T-cell (primary cell): ENCODE measurements at regions of chr2 and their contacts with region 1.

Region 1: DNA sequence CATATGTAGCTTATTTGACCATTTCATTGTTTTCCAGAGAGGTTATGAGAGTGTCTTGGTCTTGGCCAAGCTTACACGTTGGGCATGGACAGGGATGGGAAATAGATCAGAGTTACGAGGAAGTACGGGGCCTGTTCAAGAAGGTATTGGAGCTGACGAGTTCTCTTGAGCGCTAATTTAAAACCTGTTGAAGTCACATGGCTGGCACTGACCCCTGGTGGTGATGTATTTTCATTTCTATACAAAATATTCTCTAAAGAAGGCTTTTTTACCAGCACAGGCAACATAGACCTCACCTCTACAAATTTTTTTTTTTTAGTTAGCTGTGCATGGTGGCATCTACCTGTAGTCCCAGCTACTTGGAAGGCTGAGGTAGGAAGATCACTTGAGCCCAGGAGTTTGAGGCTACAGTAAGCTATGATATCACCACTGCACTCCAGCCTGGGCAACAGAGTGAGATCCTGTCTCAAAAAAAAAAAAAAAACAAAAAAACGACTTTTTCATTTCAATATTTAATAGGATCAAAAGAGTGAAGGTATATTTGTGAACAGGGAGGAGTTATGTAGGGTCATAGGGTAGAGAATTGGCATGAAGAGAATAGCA is 19.6 kb downstream of the UGP2 start:
- DNase-seq: peak; percentile 18 to 84 (median 58)
- ATAC-seq: peak; percentile 56 to 61 (median 58)
- H3K4me3 ChIP-seq: no peak overlapping the region
- H3K4me3 Mint-ChIP-seq: no peak overlapping the region
- H3K27ac ChIP-seq: no peak overlapping the region
- H3K27ac Mint-ChIP-seq: peak overlapping the region in 1 of 2 donors; percentile 22
- H3K4me1 ChIP-seq: peaks cover 5 to 15% of the 10 kb centered on the region in 2 experiments
- H3K4me1 Mint-ChIP-seq: peaks cover 27 to 47% (median 37%) of the 10 kb centered on the region in 3 donors
- H3K27me3 ChIP-seq: no peaks in the 10 kb centered on the region
- H3K27me3 Mint-ChIP-seq: no peaks in the 10 kb centered on the region

Region 2: GRCh38 chr2:63600881-63601460 is 260.4 kb before region 1 on chr2:
- CTCF ChIA-PET with region 1: no interaction called
- POLR2A ChIA-PET with region 1: interaction called in 1 of 2 experiments, 12 read pairs
- DNase-seq: no peak
- ATAC-seq: no peak
- H3K4me3 ChIP-seq: no peak overlapping the region
- H3K4me3 Mint-ChIP-seq: no peak overlapping the region
- H3K27ac ChIP-seq: no peak overlapping the region
- H3K27ac Mint-ChIP-seq: peak overlapping the region in 1 of 2 donors; percentile 25
- H3K4me1 ChIP-seq: no peaks in the 10 kb centered on the region
- H3K4me1 Mint-ChIP-seq: peaks cover 3 to 9% (median 6%) of the 10 kb centered on the region in 3 donors
- H3K27me3 ChIP-seq: no peaks in the 10 kb centered on the region
- H3K27me3 Mint-ChIP-seq: no peaks in the 10 kb centered on the region

Region 3: GRCh38 chr2:63692002-63692606 is 169.2 kb before region 1 on chr2:
- CTCF ChIA-PET with region 1: interaction called, 31 to 67 read pairs
- POLR2A ChIA-PET with region 1: interaction called in 1 of 2 experiments, 3 read pairs
- DNase-seq: peak in 10 of 35 experiments; percentile 4 to 68 (median 14)
- ATAC-seq: peak in 3 of 4 experiments; percentile 49 to 63 (median 58)
- H3K4me3 ChIP-seq: no peak overlapping the region
- H3K4me3 Mint-ChIP-seq: no peak overlapping the region
- H3K27ac ChIP-seq: no peak overlapping the region
- H3K27ac Mint-ChIP-seq: no peak overlapping the region
- H3K4me1 ChIP-seq: peaks cover 0 to 2% of the 10 kb centered on the region in 2 experiments
- H3K4me1 Mint-ChIP-seq: peaks cover 0 to 2% (median 0%) of the 10 kb centered on the region in 3 donors
- H3K27me3 ChIP-seq: no peaks in the 10 kb centered on the region
- H3K27me3 Mint-ChIP-seq: no peaks in the 10 kb centered on the region

Region 4: GRCh38 chr2:63698825-63699548 is 162.3 kb before region 1 on chr2:
- CTCF ChIA-PET with region 1: interaction called, 47 to 67 read pairs
- POLR2A ChIA-PET with region 1: interaction called in 1 of 2 experiments, 5 read pairs
- DNase-seq: peak in 3 of 35 experiments; percentile 4 to 49 (median 5)
- ATAC-seq: peak; percentile 67 to 89 (median 75)
- H3K4me3 ChIP-seq: no peak overlapping the region
- H3K4me3 Mint-ChIP-seq: no peak overlapping the region
- H3K27ac ChIP-seq: no peak overlapping the region
- H3K27ac Mint-ChIP-seq: no peak overlapping the region
- H3K4me1 ChIP-seq: no peaks in the 10 kb centered on the region
- H3K4me1 Mint-ChIP-seq: peaks cover 0 to 3% (median 0%) of the 10 kb centered on the region in 3 donors
- H3K27me3 ChIP-seq: no peaks in the 10 kb centered on the region
- H3K27me3 Mint-ChIP-seq: no peaks in the 10 kb centered on the region

Region 5: GRCh38 chr2:63841254-63842022 is 19.9 kb before region 1 on chr2 and contains the start of gene UGP2:
- CTCF ChIA-PET with region 1: interaction called, 9 to 28 read pairs
- POLR2A ChIA-PET with region 1: interaction called, 4 to 14 read pairs
- DNase-seq: peak; percentile 61 to 90 (median 83)
- ATAC-seq: peak; percentile 66 to 72 (median 70)
- H3K4me3 ChIP-seq: peak within 1 kb of the TSS; percentile 74 to 90
- H3K4me3 Mint-ChIP-seq: peak within 1 kb of the TSS; percentile 96 to 97 (median 97)
- H3K27ac ChIP-seq: peak within 1 kb of the TSS; percentile 85
- H3K27ac Mint-ChIP-seq: peak within 1 kb of the TSS; percentile 95 to 97
- H3K4me1 ChIP-seq: peaks cover 10 to 17% of the 10 kb centered on the region in 2 experiments
- H3K4me1 Mint-ChIP-seq: peaks cover 54 to 60% (median 55%) of the 10 kb centered on the region in 3 donors
- H3K27me3 ChIP-seq: no peaks in the 10 kb centered on the region
- H3K27me3 Mint-ChIP-seq: no peaks in the 10 kb centered on the region
- total RNA-seq, gene UGP2: 67.4 to 103 (median 80.1) TPM